AG04450 (cell line): ENCODE measurements at regions of chr6 and their contacts with region 1.

Region 1: DNA sequence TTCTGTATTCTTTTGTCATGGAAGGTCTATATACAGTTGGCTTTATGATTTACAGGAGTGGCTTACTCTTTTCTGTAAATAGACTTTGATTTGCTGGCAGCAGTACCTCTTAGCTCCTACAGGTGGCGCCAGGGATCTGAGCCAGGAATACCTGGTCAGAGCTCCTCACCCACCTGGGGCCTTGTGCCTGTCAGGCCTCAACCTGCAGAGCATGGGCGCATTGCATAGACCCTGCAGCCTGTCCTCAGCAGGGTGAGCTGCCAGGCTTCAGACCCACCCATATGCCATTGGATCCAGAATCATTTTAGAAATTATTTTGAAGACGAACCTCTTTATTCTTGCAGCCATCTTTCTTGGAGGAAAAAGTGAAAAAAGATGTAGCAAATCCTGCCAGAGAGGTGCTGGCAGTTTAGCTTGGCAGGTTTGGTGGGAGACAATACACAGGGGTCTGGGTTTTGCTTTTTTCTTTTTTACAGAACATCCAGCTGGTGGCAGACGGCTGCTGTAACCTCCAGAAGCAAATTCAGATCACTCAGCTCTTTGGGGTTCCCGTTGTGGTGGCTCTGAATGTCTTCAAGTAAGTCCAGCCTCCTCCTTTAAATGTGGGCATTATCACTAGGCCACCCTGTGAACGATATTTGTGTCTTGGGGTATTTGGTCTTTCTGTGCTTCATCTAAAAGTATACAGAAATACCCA is 149.1 kb downstream of the MTHFD1L start:
- DNase-seq: no peak
- H3K4me3 ChIP-seq: no peak overlapping the region; the same call in 1 of the 2 replicates
- H3K27ac ChIP-seq: peak overlapping the region; percentile 47
- H3K27me3 ChIP-seq: no peaks in the 10 kb centered on the region
- CTCF ChIP-seq: peak; percentile 98

Region 2: DNA sequence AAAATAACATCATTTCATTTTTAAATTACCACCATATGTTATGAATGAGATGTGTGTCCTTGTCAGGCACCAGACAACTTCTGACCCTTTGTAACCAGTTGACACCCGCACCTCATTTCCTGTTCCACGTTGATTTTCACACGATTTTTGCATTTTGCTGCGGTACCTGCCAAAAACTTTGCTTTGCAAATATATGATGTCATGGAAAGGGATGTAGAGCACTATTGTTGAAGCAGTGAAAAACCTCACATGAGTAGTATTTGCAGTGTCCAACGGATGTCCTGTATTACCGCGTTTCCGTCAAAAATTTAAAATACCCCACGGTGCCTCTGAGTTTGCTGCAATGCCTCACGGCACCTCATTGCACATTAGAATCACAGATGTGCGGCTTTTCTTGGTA is 33.5 kb before region 1 on chr6:
- CTCF ChIA-PET with region 1: interaction called, 11 read pairs
- POLR2A ChIA-PET with region 1: no interaction called
- DNase-seq: no peak
- H3K4me3 ChIP-seq: no peak overlapping the region
- H3K27ac ChIP-seq: no peak overlapping the region
- H3K27me3 ChIP-seq: no peaks in the 10 kb centered on the region
- CTCF ChIP-seq: no peak

Region 3: DNA sequence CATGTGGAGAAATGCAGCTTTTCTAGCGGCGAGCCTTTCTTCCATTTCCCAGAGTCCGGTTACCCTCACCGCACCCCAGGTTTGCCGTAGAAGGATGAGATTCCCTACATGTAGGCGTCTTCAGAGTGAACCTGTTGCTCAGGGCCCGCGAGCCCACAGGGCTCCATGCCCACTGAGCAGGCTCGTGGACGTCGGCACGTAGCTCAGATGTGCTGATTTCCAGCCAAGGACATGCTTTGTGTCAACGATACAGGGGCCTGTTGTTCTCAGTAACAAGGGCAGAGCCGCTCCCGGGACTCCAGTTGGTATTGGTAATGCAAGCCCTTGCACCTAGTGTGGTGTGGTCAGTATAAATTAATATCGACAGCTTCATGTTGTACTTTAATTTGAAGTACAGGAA is 10.5 kb after region 1 on chr6:
- CTCF ChIA-PET with region 1: interaction called, 53 read pairs
- POLR2A ChIA-PET with region 1: no interaction called
- DNase-seq: no peak
- H3K4me3 ChIP-seq: no peak overlapping the region
- H3K27ac ChIP-seq: no peak overlapping the region
- H3K27me3 ChIP-seq: no peaks in the 10 kb centered on the region
- CTCF ChIP-seq: no peak

Region 4: DNA sequence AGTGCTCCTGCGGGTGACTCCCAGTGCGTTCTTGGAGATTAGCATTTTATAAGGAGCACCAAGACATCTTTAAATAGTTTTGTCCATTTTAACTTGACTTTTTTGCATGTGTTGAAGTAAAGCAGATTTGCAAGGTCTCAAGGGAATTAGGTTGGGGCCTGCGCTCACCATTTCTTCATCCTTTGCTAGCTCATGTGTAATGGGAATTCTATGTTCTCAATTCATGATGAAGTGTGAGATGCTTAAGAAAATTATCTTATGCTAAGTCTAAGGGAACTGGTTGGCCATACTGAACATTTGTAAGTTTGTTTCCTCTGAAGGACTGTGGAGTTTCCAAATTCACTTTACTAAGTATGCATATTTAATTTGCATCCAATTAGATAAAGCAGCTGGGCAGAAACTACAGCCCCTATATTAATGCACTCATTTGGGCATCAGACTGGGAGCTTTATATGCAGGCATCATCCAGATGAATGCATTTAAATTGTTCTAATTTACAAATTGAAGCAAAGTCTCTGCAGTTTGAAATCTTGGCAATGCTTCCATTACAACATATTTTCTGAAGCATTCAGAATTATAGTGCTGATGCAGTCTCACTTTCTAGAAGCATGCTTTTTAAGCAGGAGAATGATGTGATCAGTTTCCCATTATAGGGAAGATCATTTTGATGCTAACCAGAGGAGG is 116.9 kb after region 1 on chr6:
- CTCF ChIA-PET with region 1: interaction called, 11 read pairs
- POLR2A ChIA-PET with region 1: no interaction called
- DNase-seq: no peak
- H3K4me3 ChIP-seq: no peak overlapping the region
- H3K27ac ChIP-seq: no peak overlapping the region
- H3K27me3 ChIP-seq: peaks cover 2% of the 10 kb centered on the region
- CTCF ChIP-seq: no peak

Region 5: GRCh38 chr6:151317103-151317994 is 302.8 kb after region 1 on chr6:
- CTCF ChIA-PET with region 1: interaction called, 131 read pairs
- POLR2A ChIA-PET with region 1: no interaction called
- DNase-seq: no peak
- H3K4me3 ChIP-seq: no peak overlapping the region
- H3K27ac ChIP-seq: peak overlapping the region; percentile 48
- H3K27me3 ChIP-seq: no peaks in the 10 kb centered on the region
- CTCF ChIP-seq: no peak

Region 6: GRCh38 chr6:151335930-151336329 is 321.4 kb after region 1 on chr6:
- CTCF ChIA-PET with region 1: interaction called, 26 read pairs
- POLR2A ChIA-PET with region 1: no interaction called
- DNase-seq: no peak
- H3K4me3 ChIP-seq: no peak overlapping the region
- H3K27ac ChIP-seq: no peak overlapping the region
- H3K27me3 ChIP-seq: no peaks in the 10 kb centered on the region
- CTCF ChIP-seq: no peak